ENCODE measurements at regions of chr16 and their contacts with region 1.

Region 1: GRCh38 chr16:68275611-68276191 is 11.4 kb downstream of the SLC7A6 start:
- DNase-seq: peak; percentile 27 to 81 (median 49)
- ATAC-seq: peak; percentile 81 to 88 (median 88)
- H3K4me3 ChIP-seq: peak overlapping the region in 1 of 2 donors; percentile 0
- H3K4me3 Mint-ChIP-seq: peak overlapping the region; percentile 46 to 80 (median 55)
- H3K27ac ChIP-seq: peak overlapping the region; percentile 75
- H3K27ac Mint-ChIP-seq: peak overlapping the region; percentile 98 to 100
- H3K4me1 ChIP-seq: peaks cover 75 to 94% of the 10 kb centered on the region in 2 experiments
- H3K4me1 Mint-ChIP-seq: peaks cover 70 to 76% (median 72%) of the 10 kb centered on the region in 3 donors
- H3K27me3 ChIP-seq: no peaks in the 10 kb centered on the region
- H3K27me3 Mint-ChIP-seq: no peaks in the 10 kb centered on the region

Region 2: DNA sequence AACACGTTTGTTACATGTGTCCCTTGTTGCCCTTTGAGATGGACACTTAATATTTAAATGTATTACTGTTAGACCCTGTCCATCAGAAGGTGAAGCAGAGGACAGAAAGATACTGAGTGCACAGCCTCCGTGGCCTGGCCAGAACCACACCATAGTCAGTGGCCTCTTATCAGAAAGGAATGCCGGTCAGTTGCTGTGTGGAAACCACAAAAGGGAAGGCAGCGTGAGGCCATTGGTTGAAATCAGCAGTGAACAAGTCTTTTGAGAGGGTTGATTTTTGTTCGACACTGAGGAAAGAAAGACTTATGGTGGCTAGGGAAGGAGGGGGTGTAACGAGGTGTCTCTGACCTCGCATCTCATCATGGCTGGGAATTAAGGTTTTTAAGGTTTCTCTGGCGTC is 1590.0 kb after region 1 on chr16:
- CTCF ChIA-PET with region 1: no interaction called
- POLR2A ChIA-PET with region 1: interaction called in 1 of 2 experiments, 10 read pairs
- DNase-seq: no peak
- ATAC-seq: no peak
- H3K4me3 ChIP-seq: no peak overlapping the region
- H3K4me3 Mint-ChIP-seq: no peak overlapping the region
- H3K27ac ChIP-seq: no peak overlapping the region
- H3K27ac Mint-ChIP-seq: no peak overlapping the region
- H3K4me1 ChIP-seq: no peaks in the 10 kb centered on the region
- H3K4me1 Mint-ChIP-seq: no peaks in the 10 kb centered on the region
- H3K27me3 ChIP-seq: no peaks in the 10 kb centered on the region
- H3K27me3 Mint-ChIP-seq: no peaks in the 10 kb centered on the region